Posterior vena cava (tissue), 2 donors: ENCODE measurements at regions of chr18 and their contacts with region 1.

Region 1: GRCh38 chr18:9079818-9080528 is 22.5 kb upstream of the NDUFV2 start:
- DNase-seq: no peak

Region 2: DNA sequence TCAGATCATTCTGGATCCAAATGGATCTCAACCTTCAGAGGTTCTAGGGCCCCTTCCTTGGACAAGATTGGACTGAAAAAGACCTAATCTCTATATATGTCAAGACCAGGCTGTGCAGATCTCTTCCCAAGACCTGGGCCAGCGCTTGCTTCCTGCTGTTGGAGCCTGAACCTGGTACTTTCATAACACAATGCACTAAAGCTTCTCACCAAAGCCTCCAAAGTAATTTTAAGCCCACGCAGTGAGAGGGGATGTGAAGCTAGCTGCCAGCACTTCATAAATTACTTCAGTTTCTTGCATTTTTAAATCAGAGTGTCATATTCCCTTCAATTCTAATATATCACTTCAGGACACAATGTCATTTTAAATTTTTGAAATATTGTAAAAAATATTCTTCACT is 1798.4 kb before region 1 on chr18:
- intact Hi-C with region 1: loop called in 1 of 2 experiments (anchors 5 kb)
- DNase-seq: no peak